Heart left ventricle (tissue), 16 donors: ENCODE measurements at regions of chr22 and their contacts with region 1.

Region 1: GRCh38 chr22:45263463-45264269 is 21.1 kb upstream of the UPK3A start:
- DNase-seq: peak; percentile 72 to 86 (median 80)
- ATAC-seq: peak; percentile 84 to 95 (median 94)
- H3K4me3 ChIP-seq: no peak overlapping the region
- H3K27ac ChIP-seq: peak overlapping the region in 6 of 12 donors; percentile 20 to 80 (median 41)
- H3K4me1 ChIP-seq: peaks cover 0 to 25% (median 10%) of the 10 kb centered on the region in 12 donors
- H3K27me3 ChIP-seq: peaks cover 0 to 5% (median 0%) of the 10 kb centered on the region in 9 donors
- CTCF ChIP-seq: peak; percentile 50 to 78 (median 60)
- POLR2A ChIP-seq: no peak

Region 2: DNA sequence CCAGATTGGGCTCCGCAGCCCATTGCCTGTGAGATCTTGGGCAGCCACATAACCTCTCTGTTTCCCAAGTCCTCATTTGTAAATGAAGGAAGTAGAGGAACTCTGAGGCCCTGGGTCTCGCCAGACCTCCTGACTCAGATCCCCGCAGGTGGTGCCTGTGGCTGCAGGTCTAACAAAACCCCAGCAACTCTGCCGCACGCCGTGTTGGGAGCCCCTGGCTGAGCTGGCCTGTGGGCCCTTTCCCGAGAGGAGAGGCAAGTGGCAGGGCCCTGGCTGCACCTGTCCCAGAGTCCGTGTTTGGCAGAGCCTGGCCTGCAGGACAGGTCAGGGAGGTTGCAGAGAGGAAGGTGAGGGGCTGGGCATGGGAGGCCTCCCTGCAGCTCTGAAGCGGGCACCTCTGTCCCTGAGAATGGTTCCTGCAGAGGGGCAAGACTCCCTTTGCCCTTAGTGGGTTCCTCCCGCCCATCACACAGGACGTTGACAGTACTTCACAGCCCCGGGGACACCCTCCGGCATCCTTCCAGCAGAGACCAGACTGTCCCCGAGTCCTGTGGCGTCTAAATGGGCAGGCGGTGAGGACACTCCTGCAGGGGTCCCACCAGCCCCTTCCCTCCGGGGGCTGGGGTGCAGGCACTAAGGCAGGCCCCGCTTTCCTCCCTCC is 443.6 kb before region 1 on chr22:
- intact Hi-C with region 1: loop called in 1 of 10 experiments (anchors 5 kb)
- DNase-seq: peak in 1 of 5 donors; percentile 13
- ATAC-seq: no peak
- H3K4me3 ChIP-seq: no peak overlapping the region
- H3K27ac ChIP-seq: no peak overlapping the region
- H3K4me1 ChIP-seq: no peaks in the 10 kb centered on the region
- H3K27me3 ChIP-seq: peaks cover 0 to 16% (median 0%) of the 10 kb centered on the region in 9 donors
- CTCF ChIP-seq: no peak
- POLR2A ChIP-seq: no peak

Region 3: DNA sequence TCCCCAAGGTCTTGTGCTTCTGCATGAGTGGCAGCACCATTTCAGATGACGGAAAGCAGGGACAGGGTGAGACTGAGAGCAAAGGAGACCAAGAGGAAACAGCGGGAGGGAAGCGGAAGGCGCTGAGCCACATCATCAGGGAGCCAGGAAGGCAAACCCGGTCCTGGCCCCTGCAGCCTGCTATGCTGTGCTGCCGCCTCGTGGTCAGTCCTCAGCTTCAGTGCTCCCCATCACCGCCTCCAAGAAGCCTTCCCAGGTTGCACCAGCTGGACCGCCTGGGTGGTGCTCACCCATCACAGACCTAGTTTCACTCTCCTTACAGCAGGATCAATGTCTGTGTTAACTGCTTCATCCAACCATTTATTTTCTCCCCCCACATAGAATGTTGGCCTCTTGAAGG is 180.9 kb before region 1 on chr22:
- intact Hi-C with region 1: no loop called
- DNase-seq: no peak
- ATAC-seq: no peak
- H3K4me3 ChIP-seq: no peak overlapping the region
- H3K27ac ChIP-seq: no peak overlapping the region
- H3K4me1 ChIP-seq: no peaks in the 10 kb centered on the region
- H3K27me3 ChIP-seq: peaks cover 0 to 58% (median 17%) of the 10 kb centered on the region in 9 donors
- CTCF ChIP-seq: no peak
- POLR2A ChIP-seq: no peak

Region 4: GRCh38 chr22:45329530-45329936 is 65.9 kb after region 1 on chr22:
- intact Hi-C with region 1: no loop called
- DNase-seq: peak; percentile 82 to 89 (median 83)
- ATAC-seq: peak; percentile 82 to 94 (median 84)
- H3K4me3 ChIP-seq: no peak overlapping the region
- H3K27ac ChIP-seq: peak overlapping the region in 10 of 12 donors; percentile 13 to 76 (median 63)
- H3K4me1 ChIP-seq: peaks cover 0 to 31% (median 14%) of the 10 kb centered on the region in 12 donors
- H3K27me3 ChIP-seq: no peaks in the 10 kb centered on the region
- CTCF ChIP-seq: no peak
- POLR2A ChIP-seq: no peak